ENCODE measurements at regions of chr1 and their contacts with region 1.

Region 1: DNA sequence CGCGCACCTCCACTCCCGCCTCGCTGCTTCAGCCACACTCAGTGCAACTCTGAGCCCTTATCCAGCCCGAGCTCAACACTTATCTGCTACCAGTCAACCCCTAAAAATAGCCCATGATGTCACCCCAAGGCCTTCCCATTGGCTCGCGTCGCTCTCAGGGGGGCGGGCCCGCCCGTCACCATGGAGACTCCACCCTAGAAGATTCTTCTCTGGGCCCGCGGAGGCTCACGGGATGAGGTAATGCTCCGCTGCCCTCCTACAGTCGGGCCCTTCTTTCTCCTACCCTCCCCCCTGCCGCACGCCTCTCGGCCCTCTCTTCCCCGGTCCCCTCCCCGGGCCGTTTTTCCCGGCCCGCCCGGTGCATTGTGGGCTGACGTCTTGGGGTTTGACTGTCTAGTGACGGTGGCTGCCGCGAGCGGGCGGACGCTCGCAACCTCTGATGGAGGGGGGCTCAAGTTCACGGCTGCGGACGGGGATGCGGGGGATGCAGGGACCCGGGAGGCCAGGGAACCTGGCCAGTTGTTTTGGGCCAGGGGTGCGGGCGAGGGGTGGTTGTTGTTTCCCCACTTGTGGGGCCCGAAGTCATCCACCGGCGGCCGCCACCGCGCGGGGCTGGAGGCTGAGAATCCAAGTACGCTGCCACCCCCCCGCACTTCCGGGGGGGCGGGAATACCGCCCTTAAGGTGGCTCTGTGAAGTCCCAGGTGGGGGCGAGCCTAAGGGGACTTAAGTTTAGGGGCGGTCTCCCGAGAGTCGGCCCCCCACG is at the start of gene JUN:
- DNase-seq: peak; percentile 99
- H3K4me3 ChIP-seq: peak within 1 kb of the TSS; percentile 93
- H3K27ac ChIP-seq: peak within 1 kb of the TSS; percentile 99
- H3K27me3 ChIP-seq: no peaks in the 10 kb centered on the region
- CTCF ChIP-seq: no peak
- polyA plus RNA-seq, gene JUN: 48.7 and 56.5 TPM in 2 replicates

Region 2: GRCh38 chr1:58646094-58646493 is 138.1 kb before region 1 on chr1:
- CTCF ChIA-PET with region 1: no interaction called
- POLR2A ChIA-PET with region 1: no interaction called
- DNase-seq: no peak
- H3K4me3 ChIP-seq: no peak overlapping the region
- H3K27ac ChIP-seq: no peak overlapping the region
- H3K27me3 ChIP-seq: no peaks in the 10 kb centered on the region
- CTCF ChIP-seq: no peak

Region 3: GRCh38 chr1:58768971-58769808 is 15.0 kb before region 1 on chr1:
- CTCF ChIA-PET with region 1: interaction called, 10 read pairs
- POLR2A ChIA-PET with region 1: interaction called, 14 read pairs
- DNase-seq: no peak
- H3K4me3 ChIP-seq: no peak overlapping the region
- H3K27ac ChIP-seq: peak overlapping the region; percentile 3
- H3K27me3 ChIP-seq: no peaks in the 10 kb centered on the region
- CTCF ChIP-seq: peak; percentile 86

Region 4: DNA sequence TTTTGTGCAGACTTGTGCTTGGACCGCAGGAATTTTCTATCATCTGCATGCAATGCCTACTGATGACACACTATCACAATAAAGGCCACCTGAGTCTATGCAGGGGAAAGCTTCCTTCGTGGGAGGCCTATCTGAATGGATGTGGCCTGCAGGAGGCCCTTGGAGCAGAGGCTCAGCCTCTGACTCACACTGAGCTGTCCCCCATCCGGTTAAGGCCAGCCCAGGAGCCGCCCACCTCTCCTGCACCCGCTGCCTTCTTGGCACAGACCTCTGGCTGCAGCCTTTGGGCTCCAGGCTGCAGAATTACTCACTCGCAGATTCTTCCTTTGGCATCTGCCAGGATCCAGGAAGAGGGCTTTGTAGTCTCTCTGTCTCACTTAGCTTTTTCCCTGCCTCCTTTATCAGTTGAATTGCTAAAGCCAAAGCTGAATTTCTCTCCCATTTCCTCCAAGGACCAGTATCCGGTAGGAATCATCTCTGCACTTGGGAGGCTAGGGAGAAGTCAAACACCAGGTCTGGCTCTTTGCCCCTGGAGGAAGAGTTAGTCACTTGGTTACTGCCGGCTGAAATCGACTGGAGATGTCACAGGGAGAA is 64.7 kb after region 1 on chr1:
- CTCF ChIA-PET with region 1: no interaction called
- POLR2A ChIA-PET with region 1: interaction called, 11 read pairs
- DNase-seq: peak; percentile 91
- H3K4me3 ChIP-seq: peak overlapping the region; percentile 15
- H3K27ac ChIP-seq: peak overlapping the region; percentile 78
- H3K27me3 ChIP-seq: no peaks in the 10 kb centered on the region
- CTCF ChIP-seq: peak; percentile 21; the same call in 1 of the 2 replicates

Region 5: DNA sequence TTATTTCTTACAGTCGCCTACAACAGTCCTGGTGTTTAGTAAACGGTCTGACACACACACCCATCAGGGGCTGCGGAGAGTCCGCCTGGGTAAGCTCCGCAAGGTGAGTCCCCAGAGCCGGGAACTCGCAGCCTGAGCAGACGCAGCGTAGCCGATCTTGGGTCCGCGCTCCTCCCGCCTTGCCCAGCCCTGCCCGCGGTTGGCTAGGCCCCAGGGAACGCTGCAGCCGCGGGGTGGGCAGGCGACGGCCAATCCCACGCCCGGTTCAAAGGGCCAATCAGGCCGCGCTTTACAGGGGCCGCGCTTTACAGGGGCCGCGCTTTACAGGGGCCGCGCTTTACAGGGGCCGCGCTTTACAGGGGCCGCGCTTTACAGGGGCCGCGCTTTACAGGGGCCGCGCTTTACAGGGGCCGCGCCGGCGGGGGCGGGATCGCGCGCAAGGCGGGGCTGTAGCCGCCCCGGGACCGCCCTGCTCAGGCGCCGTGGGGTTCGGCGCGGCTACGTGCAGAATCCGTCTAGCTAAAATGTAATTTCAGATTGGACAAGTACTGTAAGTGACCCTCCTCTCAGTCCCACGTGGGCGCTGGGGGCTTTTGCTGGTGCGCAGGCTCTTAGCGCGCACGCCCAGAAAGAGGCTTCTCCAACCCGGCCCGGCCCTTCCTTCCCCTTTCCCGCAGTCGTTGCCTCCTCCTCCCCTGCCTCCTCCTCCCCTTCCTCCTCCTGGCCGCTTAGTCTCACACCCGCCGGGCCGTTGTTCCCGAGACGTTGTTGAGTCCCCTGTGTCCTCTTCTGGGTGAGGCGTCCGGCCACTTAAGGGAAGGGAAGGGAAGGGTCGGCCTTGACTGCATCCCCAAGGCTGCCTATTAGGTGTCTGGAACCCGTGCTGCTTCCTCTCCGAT is 512.4 kb after region 1 on chr1 and contains the start of gene FGGY:
- CTCF ChIA-PET with region 1: no interaction called
- POLR2A ChIA-PET with region 1: interaction called, 17 read pairs
- DNase-seq: peak; percentile 98
- H3K4me3 ChIP-seq: peak within 1 kb of the TSS; percentile 69
- H3K27ac ChIP-seq: peak within 1 kb of the TSS; percentile 84
- H3K27me3 ChIP-seq: no peaks in the 10 kb centered on the region
- CTCF ChIP-seq: no peak
- polyA plus RNA-seq, gene FGGY: 11.8 and 12.6 TPM in 2 replicates

Region 6: GRCh38 chr1:59672851-59673572 is 888.8 kb after region 1 on chr1:
- CTCF ChIA-PET with region 1: interaction called, 4 read pairs
- POLR2A ChIA-PET with region 1: interaction called, 10 read pairs
- DNase-seq: no peak
- H3K4me3 ChIP-seq: no peak overlapping the region
- H3K27ac ChIP-seq: no peak overlapping the region
- H3K27me3 ChIP-seq: no peaks in the 10 kb centered on the region
- CTCF ChIP-seq: no peak

Region 7: DNA sequence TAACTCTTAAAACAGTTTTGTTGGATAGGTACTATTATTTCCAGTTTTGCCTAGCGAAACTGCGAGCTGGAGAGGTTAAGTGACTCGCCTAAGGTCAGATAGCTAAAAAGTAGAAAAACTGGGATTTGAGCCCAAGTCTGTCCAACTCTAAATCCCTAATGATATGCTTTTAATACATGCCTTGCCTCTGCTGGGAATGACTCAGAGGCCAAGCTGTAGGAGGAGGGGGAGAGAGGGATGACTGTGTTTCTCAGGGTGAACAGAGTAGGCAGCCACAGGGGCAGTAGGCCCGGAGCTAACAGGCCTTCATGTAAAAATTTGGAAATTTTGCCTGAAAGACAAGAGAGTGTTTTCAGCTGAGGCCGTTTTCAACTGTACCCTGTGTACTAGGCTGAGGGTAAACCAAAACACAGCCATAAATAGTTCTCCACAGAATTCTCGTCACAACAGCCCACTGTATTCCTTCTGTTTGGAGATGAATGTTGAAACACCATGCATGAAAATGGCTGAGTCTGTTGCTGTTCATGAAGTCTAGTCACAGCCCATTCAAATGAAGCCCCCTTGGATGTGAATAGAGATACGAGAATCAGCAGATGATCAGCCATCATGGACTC is 923.1 kb after region 1 on chr1:
- CTCF ChIA-PET with region 1: interaction called, 3 read pairs
- POLR2A ChIA-PET with region 1: interaction called, 14 read pairs
- DNase-seq: peak; percentile 89
- H3K4me3 ChIP-seq: no peak overlapping the region
- H3K27ac ChIP-seq: peak overlapping the region; percentile 87
- H3K27me3 ChIP-seq: no peaks in the 10 kb centered on the region
- CTCF ChIP-seq: no peak

Region 8: GRCh38 chr1:59738152-59738551 is 954.0 kb after region 1 on chr1:
- CTCF ChIA-PET with region 1: no interaction called
- POLR2A ChIA-PET with region 1: interaction called, 11 read pairs
- DNase-seq: peak; percentile 90
- H3K4me3 ChIP-seq: no peak overlapping the region
- H3K27ac ChIP-seq: peak overlapping the region; percentile 97
- H3K27me3 ChIP-seq: no peaks in the 10 kb centered on the region
- CTCF ChIP-seq: no peak